A549 (cell line): ENCODE measurements at regions of chr9 and their contacts with region 1.

Region 1: GRCh38 chr9:14353222-14354056 is 39.5 kb upstream of the NFIB start:
- DNase-seq: peak; percentile 81 to 91
- ATAC-seq: peak; percentile 91 to 96
- H3K4me3 ChIP-seq: 0 out of 3 replicates have a peak overlapping the region, but pooled peaks have one; percentile 14
- H3K27ac ChIP-seq: peak overlapping the region in 1 of 2 experiments; percentile 42; a peak in 2 of 6 replicates
- H3K4me1 ChIP-seq: peaks cover 4% of the 10 kb centered on the region; the same call in 1 of the 3 replicates
- CTCF ChIP-seq: peak; percentile 87
- EP300 ChIP-seq: no peak
- POLR2A ChIP-seq: no peak
- RAD21 ChIP-seq: peak; percentile 94 to 95

Region 2: GRCh38 chr9:13427587-13427986 is 925.9 kb before region 1 on chr9:
- CTCF ChIA-PET with region 1: interaction called, 67 read pairs
- POLR2A ChIA-PET with region 1: no interaction called
- DNase-seq: peak; percentile 6 to 48
- ATAC-seq: no peak
- H3K4me3 ChIP-seq: no peak overlapping the region
- H3K27ac ChIP-seq: no peak overlapping the region
- H3K4me1 ChIP-seq: no peaks in the 10 kb centered on the region
- CTCF ChIP-seq: peak; percentile 73
- EP300 ChIP-seq: no peak
- POLR2A ChIP-seq: no peak
- RAD21 ChIP-seq: peak; percentile 65 to 82

Region 3: GRCh38 chr9:13446938-13447842 is 906.2 kb before region 1 on chr9:
- CTCF ChIA-PET with region 1: interaction called, 25 read pairs
- POLR2A ChIA-PET with region 1: no interaction called
- DNase-seq: no peak
- ATAC-seq: no peak
- H3K4me3 ChIP-seq: no peak overlapping the region
- H3K27ac ChIP-seq: no peak overlapping the region
- H3K4me1 ChIP-seq: no peaks in the 10 kb centered on the region
- CTCF ChIP-seq: peak; percentile 29; the same call in 2 of the 3 replicates
- EP300 ChIP-seq: no peak
- POLR2A ChIP-seq: no peak
- RAD21 ChIP-seq: peak in 1 of 2 experiments; percentile 49; a peak in 3 of 5 replicates

Region 4: GRCh38 chr9:14322211-14323082 is 31.0 kb before region 1 on chr9:
- CTCF ChIA-PET with region 1: interaction called, 16 read pairs
- POLR2A ChIA-PET with region 1: interaction called, 4 read pairs
- DNase-seq: peak; percentile 80 to 93
- ATAC-seq: peak; percentile 90 to 94
- H3K4me3 ChIP-seq: peak overlapping the region; percentile 60
- H3K27ac ChIP-seq: peak overlapping the region; percentile 94 to 99
- H3K4me1 ChIP-seq: peaks cover 54% of the 10 kb centered on the region
- CTCF ChIP-seq: peak; percentile 38
- EP300 ChIP-seq: no peak
- POLR2A ChIP-seq: peak; percentile 57
- RAD21 ChIP-seq: peak; percentile 36 to 72

Region 5: DNA sequence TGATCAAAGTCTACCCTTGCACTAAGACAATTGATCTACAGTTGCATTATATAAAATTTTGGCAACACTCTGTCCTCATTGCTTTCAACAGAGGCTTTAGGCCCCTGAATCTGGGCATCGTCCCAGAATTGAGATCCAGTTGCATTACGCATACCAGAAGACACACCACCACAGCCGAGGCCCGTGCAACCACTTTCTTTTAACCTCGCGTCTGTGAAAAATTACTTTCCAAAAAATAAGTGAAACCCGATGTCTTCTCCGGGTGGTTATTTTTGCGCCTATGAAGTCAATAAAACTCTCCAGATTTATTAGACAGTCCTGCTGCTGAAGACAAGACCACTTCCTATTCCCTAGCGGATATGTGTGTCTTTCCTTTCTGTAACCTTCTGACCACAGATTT is 12.6 kb after region 1 on chr9:
- CTCF ChIA-PET with region 1: interaction called, 40 read pairs
- POLR2A ChIA-PET with region 1: interaction called, 4 read pairs
- DNase-seq: no peak
- ATAC-seq: no peak
- H3K4me3 ChIP-seq: no peak overlapping the region
- H3K27ac ChIP-seq: no peak overlapping the region
- H3K4me1 ChIP-seq: no peaks in the 10 kb centered on the region
- CTCF ChIP-seq: no peak
- EP300 ChIP-seq: no peak
- POLR2A ChIP-seq: no peak
- RAD21 ChIP-seq: no peak

Region 6: GRCh38 chr9:14383294-14383693 is 29.9 kb after region 1 on chr9:
- CTCF ChIA-PET with region 1: interaction called, 34 read pairs
- POLR2A ChIA-PET with region 1: no interaction called
- DNase-seq: no peak
- ATAC-seq: no peak
- H3K4me3 ChIP-seq: no peak overlapping the region
- H3K27ac ChIP-seq: no peak overlapping the region
- H3K4me1 ChIP-seq: no peaks in the 10 kb centered on the region
- CTCF ChIP-seq: no peak
- EP300 ChIP-seq: no peak
- POLR2A ChIP-seq: no peak
- RAD21 ChIP-seq: no peak

Region 7: GRCh38 chr9:14428781-14429230 is 75.4 kb after region 1 on chr9:
- CTCF ChIA-PET with region 1: interaction called, 18 read pairs
- POLR2A ChIA-PET with region 1: no interaction called
- DNase-seq: peak; percentile 41 to 69
- ATAC-seq: peak; percentile 78 to 89; a peak in 5 of 6 replicates
- H3K4me3 ChIP-seq: no peak overlapping the region
- H3K27ac ChIP-seq: no peak overlapping the region
- H3K4me1 ChIP-seq: peaks cover 9% of the 10 kb centered on the region; the same call in 1 of the 3 replicates
- CTCF ChIP-seq: peak; percentile 86
- EP300 ChIP-seq: no peak
- POLR2A ChIP-seq: no peak
- RAD21 ChIP-seq: peak; percentile 67 to 71